ENCODE measurements at regions of chr19 and their contacts with region 1.

Region 1: DNA sequence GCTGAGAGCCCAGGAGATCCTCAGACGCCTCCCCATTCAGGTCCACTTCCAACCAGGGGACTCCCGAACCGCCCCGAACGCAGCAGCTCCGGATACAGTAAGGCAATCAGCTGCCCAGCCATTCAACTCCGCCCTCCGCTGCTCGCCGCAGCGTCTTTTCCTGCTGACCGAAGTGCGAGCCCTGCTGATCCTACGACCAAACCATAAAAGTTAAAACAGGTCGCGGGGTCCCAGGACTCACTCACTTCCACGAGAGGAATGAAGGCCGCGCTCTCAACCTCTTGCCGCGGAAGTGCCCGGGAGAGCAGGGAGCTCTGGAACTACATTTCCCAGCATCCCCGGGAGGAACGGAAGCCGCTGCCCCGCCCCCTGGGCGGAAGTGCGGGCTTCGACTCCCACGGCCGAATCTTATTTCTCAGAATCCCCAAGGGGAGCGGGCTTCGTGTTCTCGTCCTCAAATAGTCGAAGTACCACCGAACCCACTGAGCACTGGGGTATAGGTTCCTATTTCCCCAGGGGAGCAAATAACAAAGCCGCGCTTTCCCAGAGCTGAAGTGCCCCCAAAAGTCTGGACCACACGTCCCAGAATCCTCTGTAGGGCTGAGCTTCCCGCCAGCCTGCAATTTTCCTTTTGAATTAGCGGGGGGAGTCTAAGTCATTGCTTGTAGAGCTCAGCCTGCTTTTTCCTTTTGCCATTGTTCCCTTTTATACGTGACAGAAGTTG is at the start of gene ZNF45:
- H3K4me3 ChIP-seq: peak within 1 kb of the TSS; percentile 74
- H3K27ac ChIP-seq: peak within 1 kb of the TSS; percentile 78
- H3K4me1 ChIP-seq: peaks cover 18% of the 10 kb centered on the region
- CTCF ChIP-seq: peak; percentile 58; the same call in 1 of the 2 replicates

Region 2: GRCh38 chr19:43901395-43902390 is 33.5 kb before region 1 on chr19:
- CTCF ChIA-PET with region 1: no interaction called
- POLR2A ChIA-PET with region 1: interaction called, 25 read pairs
- H3K4me3 ChIP-seq: peak overlapping the region; percentile 41
- H3K27ac ChIP-seq: peak overlapping the region; percentile 30; the same call in 1 of the 2 replicates
- H3K4me1 ChIP-seq: peaks cover 9% of the 10 kb centered on the region
- CTCF ChIP-seq: no peak

Region 3: DNA sequence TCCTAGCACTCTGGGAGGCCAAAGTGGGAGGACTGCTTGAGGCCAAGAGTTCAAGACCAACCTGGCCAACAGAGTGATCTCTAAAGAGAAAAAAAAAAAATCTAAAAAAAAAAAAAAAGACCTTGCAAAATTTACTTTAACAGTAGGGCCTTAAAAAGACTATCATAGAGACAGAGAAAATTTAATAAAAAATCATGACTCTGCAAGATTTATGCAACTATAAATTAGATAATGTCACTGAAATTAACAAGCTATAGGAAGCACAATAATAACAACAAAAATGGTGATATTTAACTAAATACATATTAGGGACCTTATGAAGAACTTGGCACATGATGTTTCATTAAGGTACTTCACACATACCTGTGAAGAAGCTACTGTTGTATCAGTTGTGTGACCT is 11.3 kb before region 1 on chr19:
- CTCF ChIA-PET with region 1: interaction called, 3 read pairs
- POLR2A ChIA-PET with region 1: interaction called, 20 read pairs
- H3K4me3 ChIP-seq: no peak overlapping the region
- H3K27ac ChIP-seq: no peak overlapping the region
- H3K4me1 ChIP-seq: no peaks in the 10 kb centered on the region
- CTCF ChIP-seq: no peak

Region 4: GRCh38 chr19:44002566-44003460 is 67.7 kb after region 1 on chr19 and contains the start of gene ZNF230:
- CTCF ChIA-PET with region 1: no interaction called
- POLR2A ChIA-PET with region 1: interaction called, 15 read pairs
- H3K4me3 ChIP-seq: peak within 1 kb of the TSS; percentile 52
- H3K27ac ChIP-seq: peak within 1 kb of the TSS; percentile 55
- H3K4me1 ChIP-seq: peaks cover 10% of the 10 kb centered on the region
- CTCF ChIP-seq: peak; percentile 83

Region 5: GRCh38 chr19:44066305-44066704 is 131.2 kb after region 1 on chr19:
- CTCF ChIA-PET with region 1: no interaction called
- POLR2A ChIA-PET with region 1: no interaction called
- H3K4me3 ChIP-seq: no peak overlapping the region
- H3K27ac ChIP-seq: no peak overlapping the region
- H3K4me1 ChIP-seq: peaks cover 1% of the 10 kb centered on the region
- CTCF ChIP-seq: no peak

Region 6: DNA sequence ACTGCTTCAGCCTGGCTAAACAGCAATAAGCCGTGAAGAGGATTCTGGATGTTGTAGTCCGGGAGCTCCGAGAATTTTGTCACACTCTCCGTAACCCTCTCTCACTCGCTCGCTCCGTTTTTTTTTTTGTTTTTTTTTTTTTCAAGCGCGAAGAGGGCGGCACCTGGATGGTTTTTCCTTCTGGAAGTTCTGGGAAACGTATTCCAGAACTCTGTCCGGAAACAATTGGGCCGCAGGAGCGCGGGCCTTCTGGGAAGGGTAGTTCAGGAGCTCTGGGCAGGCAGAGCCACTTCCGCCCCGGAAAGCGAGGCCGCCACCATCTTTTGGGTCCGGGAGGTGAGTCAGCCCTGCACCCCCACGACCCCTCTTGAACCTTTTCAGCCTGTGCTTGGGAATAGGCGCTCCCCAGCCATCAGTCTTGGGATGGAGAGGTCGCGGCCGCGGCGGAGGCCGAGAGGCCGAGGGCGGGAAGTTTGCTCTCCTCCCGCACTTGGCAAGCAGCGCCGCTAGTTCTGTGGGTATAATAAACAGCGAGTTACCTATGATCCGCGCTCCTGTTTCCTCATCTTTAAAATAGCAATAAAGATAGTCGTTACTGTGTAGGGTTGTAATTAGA is 277.2 kb after region 1 on chr19 and contains the start of gene ZNF227:
- CTCF ChIA-PET with region 1: interaction called, 3 read pairs
- POLR2A ChIA-PET with region 1: interaction called, 15 read pairs
- H3K4me3 ChIP-seq: peak within 1 kb of the TSS; percentile 64
- H3K27ac ChIP-seq: peak within 1 kb of the TSS; percentile 90
- H3K4me1 ChIP-seq: peaks cover 38% of the 10 kb centered on the region
- CTCF ChIP-seq: no peak

Measured in HEK293 (cell line).